Activated CD4-positive, alpha-beta T cell treated with anti-CD3 and anti-CD28 coated beads, Interleukin-2, amount 10 ng/mL, durations not matched to agents 24 days and 14 days (primary cell): ENCODE measurements at regions of chr14 and their contacts with region 1.

Region 1: GRCh38 chr14:104137297-104138097 is 890 bp upstream of the KIF26A start:
- DNase-seq: peak; percentile 90
- H3K4me3 Mint-ChIP-seq: peak overlapping the region; percentile 49
- H3K27ac Mint-ChIP-seq: no peak overlapping the region
- H3K4me1 Mint-ChIP-seq: peaks cover 4% of the 10 kb centered on the region
- H3K27me3 Mint-ChIP-seq: peaks cover 34% of the 10 kb centered on the region

Region 2: DNA sequence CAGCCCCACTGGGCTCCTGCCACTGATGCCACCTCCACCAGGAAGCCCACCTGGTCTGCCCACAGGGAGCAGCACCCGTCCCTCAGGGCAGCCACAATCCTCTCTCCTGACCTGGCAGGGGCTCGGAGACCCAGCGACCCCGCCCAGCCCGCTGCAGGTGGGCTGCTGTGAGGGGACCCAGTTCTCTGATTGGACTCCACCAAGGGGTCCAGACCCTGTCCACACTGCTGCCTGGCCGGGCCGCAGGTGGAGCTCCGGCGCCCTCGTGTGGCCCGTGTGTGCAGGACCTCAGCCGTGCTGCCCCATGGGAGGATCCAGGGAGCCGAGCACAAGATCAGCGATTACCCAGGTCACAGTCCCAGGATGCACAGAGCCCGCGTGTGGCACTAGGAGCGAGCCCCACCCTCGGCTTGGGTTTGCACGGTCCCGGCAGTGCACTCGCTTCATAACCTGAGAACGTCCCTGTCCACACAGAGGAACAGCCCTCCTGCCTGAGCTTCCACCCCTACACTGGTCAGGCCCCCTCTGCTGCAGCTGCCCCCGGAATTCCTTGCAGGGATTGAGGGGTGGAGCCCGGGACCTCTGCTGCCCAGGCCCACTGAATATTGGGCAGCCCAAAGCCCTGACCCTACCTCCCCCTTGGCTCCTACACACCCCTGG is 502.5 kb after region 1 on chr14:
- intact Hi-C with region 1: loop called (anchors 10 kb)
- DNase-seq: peak; percentile 84
- H3K4me3 Mint-ChIP-seq: no peak overlapping the region
- H3K27ac Mint-ChIP-seq: no peak overlapping the region
- H3K4me1 Mint-ChIP-seq: no peaks in the 10 kb centered on the region
- H3K27me3 Mint-ChIP-seq: peaks cover 5% of the 10 kb centered on the region